Naive thymus-derived CD4-positive, alpha-beta T cell (primary cell): ENCODE measurements at regions of chr7 and their contacts with region 1.

Region 1: DNA sequence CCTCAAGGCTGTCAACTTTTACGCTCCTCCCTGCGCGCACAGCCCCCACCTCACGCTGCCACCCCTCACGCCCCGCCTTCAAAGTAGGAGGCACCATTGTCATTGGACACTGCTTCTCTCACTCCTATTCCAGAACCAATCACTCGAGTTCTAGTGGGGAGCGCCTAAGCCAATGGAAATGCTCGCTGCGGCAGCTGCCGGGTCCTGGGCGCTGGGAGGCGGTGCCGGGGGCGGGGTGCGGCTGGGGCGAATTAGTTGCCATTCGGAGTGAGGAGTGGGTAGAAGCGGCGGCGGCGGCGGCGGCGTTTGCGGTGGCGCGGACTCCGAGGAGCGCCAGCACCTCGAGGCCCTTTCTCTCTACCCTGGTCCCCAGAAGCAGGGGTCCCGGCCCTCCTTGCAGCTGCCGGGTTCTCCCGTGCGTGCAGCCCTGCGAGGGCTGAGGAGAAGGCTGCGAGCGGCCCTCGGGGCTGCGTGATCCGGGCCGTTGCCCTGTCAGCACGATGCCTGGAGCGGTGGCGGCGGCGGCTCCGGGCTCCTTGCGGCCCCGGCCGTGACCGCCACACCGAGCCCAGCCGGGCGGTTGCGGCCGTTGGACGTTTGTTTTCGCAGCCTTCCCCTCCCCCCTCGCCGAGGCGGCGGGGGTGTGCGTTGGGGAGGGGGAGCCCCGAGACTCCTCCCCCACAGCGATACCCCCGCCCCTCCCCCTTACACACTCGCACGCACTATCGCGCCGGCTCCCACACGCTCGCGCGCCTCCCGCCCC is at the start of gene GLCCI1:
- DNase-seq: peak; percentile 90 to 98 (median 97)
- ATAC-seq: peak; percentile 95
- H3K4me3 ChIP-seq: peak within 1 kb of the TSS; percentile 75
- H3K4me3 Mint-ChIP-seq: peak within 1 kb of the TSS in 9 of 10 donors; percentile 88 to 99 (median 94)
- H3K27ac ChIP-seq: peak within 1 kb of the TSS; percentile 88
- H3K27ac Mint-ChIP-seq: peak within 1 kb of the TSS; percentile 78 to 98 (median 91)
- H3K4me1 ChIP-seq: peaks cover 16 to 42% of the 10 kb centered on the region in 2 donors
- H3K4me1 Mint-ChIP-seq: peaks cover 5 to 39% (median 29%) of the 10 kb centered on the region in 7 donors
- H3K27me3 ChIP-seq: no peaks in the 10 kb centered on the region
- H3K27me3 Mint-ChIP-seq: no peaks in the 10 kb centered on the region
- total RNA-seq, gene GLCCI1: 24.9 to 43.1 (median 35.4) TPM

Region 2: GRCh38 chr7:7556847-7557246 is 411.9 kb before region 1 on chr7:
- CTCF ChIA-PET with region 1: no interaction called
- POLR2A ChIA-PET with region 1: no interaction called
- intact Hi-C with region 1: no loop called
- DNase-seq: no peak
- ATAC-seq: no peak
- H3K4me3 ChIP-seq: no peak overlapping the region
- H3K4me3 Mint-ChIP-seq: no peak overlapping the region
- H3K27ac ChIP-seq: no peak overlapping the region
- H3K27ac Mint-ChIP-seq: no peak overlapping the region
- H3K4me1 ChIP-seq: no peaks in the 10 kb centered on the region
- H3K4me1 Mint-ChIP-seq: no peaks in the 10 kb centered on the region
- H3K27me3 ChIP-seq: no peaks in the 10 kb centered on the region
- H3K27me3 Mint-ChIP-seq: peaks cover 0 to 39% (median 3%) of the 10 kb centered on the region in 5 donors

Region 3: GRCh38 chr7:7566651-7567611 is 401.8 kb before region 1 on chr7 and contains the start of gene MIOS:
- CTCF ChIA-PET with region 1: no interaction called
- POLR2A ChIA-PET with region 1: interaction called, 5 read pairs
- intact Hi-C with region 1: loop called (anchors 1 to 2 kb)
- DNase-seq: peak; percentile 73 to 88 (median 83)
- ATAC-seq: peak; percentile 95
- H3K4me3 ChIP-seq: peak within 1 kb of the TSS; percentile 77
- H3K4me3 Mint-ChIP-seq: peak within 1 kb of the TSS in 9 of 10 donors; percentile 75 to 92 (median 86)
- H3K27ac ChIP-seq: peak within 1 kb of the TSS; percentile 98
- H3K27ac Mint-ChIP-seq: peak within 1 kb of the TSS; percentile 80 to 91 (median 85)
- H3K4me1 ChIP-seq: peaks cover 27 to 29% of the 10 kb centered on the region in 2 donors
- H3K4me1 Mint-ChIP-seq: peaks cover 21 to 41% (median 37%) of the 10 kb centered on the region in 7 donors
- H3K27me3 ChIP-seq: no peaks in the 10 kb centered on the region
- H3K27me3 Mint-ChIP-seq: no peaks in the 10 kb centered on the region
- total RNA-seq, gene MIOS: 24.3 to 31.7 (median 28.7) TPM

Region 4: DNA sequence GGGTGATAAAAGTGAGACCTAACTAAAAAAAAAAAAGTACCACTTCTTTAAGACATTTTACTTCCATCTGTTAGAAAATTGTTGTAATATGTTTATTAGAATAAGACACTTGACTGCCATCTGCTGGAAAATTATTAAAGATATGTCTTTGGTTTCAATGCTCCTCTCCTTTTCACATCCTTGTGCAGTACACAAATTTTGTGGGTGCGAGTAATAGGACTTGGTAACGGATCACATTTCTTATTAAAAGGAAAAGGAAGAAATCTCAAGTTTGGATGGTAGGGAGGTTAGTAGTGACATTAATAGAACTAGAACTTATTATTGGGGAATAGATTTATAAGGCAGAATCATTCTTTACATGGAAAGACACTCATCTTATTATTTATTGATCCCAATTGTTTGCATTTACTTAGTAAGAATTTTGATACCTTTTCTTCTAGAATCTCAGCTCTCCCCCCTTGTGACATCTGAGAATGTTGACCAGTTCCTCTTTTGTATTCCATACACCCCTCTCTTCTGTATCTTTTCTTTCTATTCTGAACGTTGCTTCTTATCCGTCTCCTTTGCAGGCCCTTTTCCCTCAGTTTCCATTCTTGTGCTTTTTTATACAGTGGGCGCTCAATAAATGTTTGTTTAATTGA is 207.3 kb before region 1 on chr7:
- CTCF ChIA-PET with region 1: interaction called, 3 read pairs
- POLR2A ChIA-PET with region 1: interaction called, 13 read pairs
- intact Hi-C with region 1: loop called (anchors 1 kb)
- DNase-seq: peak in 7 of 9 donors; percentile 25 to 59 (median 51)
- ATAC-seq: peak; percentile 45
- H3K4me3 ChIP-seq: peak overlapping the region; percentile 48
- H3K4me3 Mint-ChIP-seq: peak overlapping the region; percentile 69 to 99 (median 90)
- H3K27ac ChIP-seq: peak overlapping the region; percentile 76
- H3K27ac Mint-ChIP-seq: peak overlapping the region; percentile 88 to 99 (median 94)
- H3K4me1 ChIP-seq: peaks cover 8 to 31% of the 10 kb centered on the region in 2 donors
- H3K4me1 Mint-ChIP-seq: peaks cover 30 to 54% (median 51%) of the 10 kb centered on the region in 7 donors
- H3K27me3 ChIP-seq: no peaks in the 10 kb centered on the region
- H3K27me3 Mint-ChIP-seq: no peaks in the 10 kb centered on the region

Region 5: DNA sequence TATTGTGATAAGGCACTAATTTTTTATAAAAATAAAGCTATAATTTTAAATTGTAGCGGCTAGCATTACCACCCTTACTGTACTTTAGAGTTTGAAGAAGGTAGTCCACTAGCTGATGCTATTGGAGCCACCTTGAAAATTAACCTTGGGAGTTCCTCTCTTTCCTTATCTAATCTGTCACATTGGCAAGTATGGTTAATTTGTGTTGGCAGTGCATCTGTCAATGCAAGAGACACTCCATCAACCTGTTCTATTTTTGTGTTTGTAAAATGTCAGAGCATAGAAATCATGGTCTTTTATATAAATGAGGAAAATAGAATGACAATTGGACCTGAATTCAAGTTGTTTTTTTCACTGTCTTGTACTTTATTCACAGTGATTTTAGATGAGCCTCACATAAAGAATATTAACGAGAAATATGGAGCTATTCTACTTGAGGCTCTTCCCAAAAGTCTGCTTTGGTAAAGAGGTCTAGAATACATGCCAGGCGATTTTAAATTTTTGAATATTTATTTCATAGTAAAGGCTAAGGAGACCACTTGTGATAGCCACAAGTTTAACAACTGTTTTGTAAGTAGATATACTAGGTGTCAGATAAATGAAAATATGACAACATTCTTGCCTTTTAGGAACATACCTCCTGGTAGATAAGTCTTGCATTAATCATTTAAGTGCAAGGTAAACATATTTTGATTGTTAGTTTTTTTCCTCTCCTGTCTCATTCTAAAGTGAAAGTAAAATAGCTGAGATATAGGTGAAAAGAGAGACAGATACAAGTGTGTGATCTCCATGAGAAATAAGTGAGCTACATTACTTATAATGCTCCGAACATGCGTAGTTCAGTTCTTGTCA is 20.6 kb after region 1 on chr7:
- CTCF ChIA-PET with region 1: no interaction called
- POLR2A ChIA-PET with region 1: interaction called, 33 read pairs
- intact Hi-C with region 1: loop called (anchors 1 to 2 kb)
- DNase-seq: no peak
- ATAC-seq: peak; percentile 46
- H3K4me3 ChIP-seq: peak overlapping the region; percentile 17
- H3K4me3 Mint-ChIP-seq: peak overlapping the region; percentile 17 to 87 (median 79)
- H3K27ac ChIP-seq: peak overlapping the region; percentile 52
- H3K27ac Mint-ChIP-seq: peak overlapping the region; percentile 35 to 86 (median 70)
- H3K4me1 ChIP-seq: peaks cover 12 to 24% of the 10 kb centered on the region in 2 donors
- H3K4me1 Mint-ChIP-seq: peaks cover 27 to 71% (median 62%) of the 10 kb centered on the region in 7 donors
- H3K27me3 ChIP-seq: no peaks in the 10 kb centered on the region
- H3K27me3 Mint-ChIP-seq: no peaks in the 10 kb centered on the region

Region 6: GRCh38 chr7:8035647-8036518 is 67.2 kb after region 1 on chr7:
- CTCF ChIA-PET with region 1: interaction called, 3 read pairs
- POLR2A ChIA-PET with region 1: interaction called, 11 read pairs
- intact Hi-C with region 1: loop called in 1 of 2 experiments (anchors 1 kb)
- DNase-seq: peak in 7 of 9 donors; percentile 13 to 51 (median 36)
- ATAC-seq: peak; percentile 96
- H3K4me3 ChIP-seq: no peak overlapping the region
- H3K4me3 Mint-ChIP-seq: no peak overlapping the region
- H3K27ac ChIP-seq: no peak overlapping the region
- H3K27ac Mint-ChIP-seq: peak overlapping the region in 8 of 9 donors; percentile 21 to 83 (median 58)
- H3K4me1 ChIP-seq: peaks cover 5 to 6% of the 10 kb centered on the region in 2 donors
- H3K4me1 Mint-ChIP-seq: peaks cover 9 to 28% (median 19%) of the 10 kb centered on the region in 7 donors
- H3K27me3 ChIP-seq: no peaks in the 10 kb centered on the region
- H3K27me3 Mint-ChIP-seq: no peaks in the 10 kb centered on the region

Region 7: GRCh38 chr7:8134089-8134733 is 165.5 kb after region 1 on chr7:
- CTCF ChIA-PET with region 1: no interaction called
- POLR2A ChIA-PET with region 1: interaction called, 7 read pairs
- intact Hi-C with region 1: loop called (anchors 1 kb)
- DNase-seq: peak in 8 of 9 donors; percentile 25 to 51 (median 44)
- ATAC-seq: peak; percentile 32
- H3K4me3 ChIP-seq: peak overlapping the region; percentile 7
- H3K4me3 Mint-ChIP-seq: peak overlapping the region; percentile 25 to 82 (median 61)
- H3K27ac ChIP-seq: peak overlapping the region; percentile 47
- H3K27ac Mint-ChIP-seq: peak overlapping the region; percentile 78 to 98 (median 94)
- H3K4me1 ChIP-seq: peaks cover 45 to 50% of the 10 kb centered on the region in 2 donors
- H3K4me1 Mint-ChIP-seq: peaks cover 38 to 65% (median 56%) of the 10 kb centered on the region in 7 donors
- H3K27me3 ChIP-seq: no peaks in the 10 kb centered on the region
- H3K27me3 Mint-ChIP-seq: no peaks in the 10 kb centered on the region

Region 8: GRCh38 chr7:8197994-8198698 is 229.4 kb after region 1 on chr7:
- CTCF ChIA-PET with region 1: no interaction called
- POLR2A ChIA-PET with region 1: no interaction called
- intact Hi-C with region 1: loop called in 1 of 2 experiments (anchors 2 kb)
- DNase-seq: no peak
- ATAC-seq: peak; percentile 60
- H3K4me3 ChIP-seq: no peak overlapping the region
- H3K4me3 Mint-ChIP-seq: peak overlapping the region in 1 of 10 donors; percentile 44
- H3K27ac ChIP-seq: no peak overlapping the region
- H3K27ac Mint-ChIP-seq: peak overlapping the region in 2 of 9 donors; percentile 57 to 60
- H3K4me1 ChIP-seq: peaks cover 0 to 10% of the 10 kb centered on the region in 2 donors
- H3K4me1 Mint-ChIP-seq: peaks cover 0 to 57% (median 7%) of the 10 kb centered on the region in 7 donors
- H3K27me3 ChIP-seq: no peaks in the 10 kb centered on the region
- H3K27me3 Mint-ChIP-seq: peaks cover 3 to 17% (median 4%) of the 10 kb centered on the region in 5 donors

Region 9: DNA sequence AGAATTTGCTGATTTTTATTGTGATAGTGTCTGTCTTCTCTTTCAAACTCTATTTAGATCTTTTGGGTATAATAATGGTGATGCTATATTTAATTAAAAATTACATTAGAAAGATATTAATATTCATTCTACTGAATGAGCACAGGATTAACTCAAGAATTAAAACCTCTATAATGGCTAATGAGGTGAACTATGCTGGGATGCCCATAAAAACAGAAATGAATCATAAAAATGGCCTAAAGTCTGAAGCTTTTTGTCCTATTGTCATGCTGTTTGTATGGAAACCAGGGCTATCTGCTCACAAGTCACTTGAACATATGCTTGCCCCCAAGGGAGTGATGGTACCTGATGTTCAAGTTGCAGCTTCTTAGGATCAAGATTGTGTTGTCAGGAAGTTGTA is 369.5 kb after region 1 on chr7:
- CTCF ChIA-PET with region 1: no interaction called
- POLR2A ChIA-PET with region 1: no interaction called
- intact Hi-C with region 1: no loop called
- DNase-seq: no peak
- ATAC-seq: no peak
- H3K4me3 ChIP-seq: no peak overlapping the region
- H3K4me3 Mint-ChIP-seq: no peak overlapping the region
- H3K27ac ChIP-seq: no peak overlapping the region
- H3K27ac Mint-ChIP-seq: no peak overlapping the region
- H3K4me1 ChIP-seq: no peaks in the 10 kb centered on the region
- H3K4me1 Mint-ChIP-seq: no peaks in the 10 kb centered on the region
- H3K27me3 ChIP-seq: no peaks in the 10 kb centered on the region
- H3K27me3 Mint-ChIP-seq: peaks cover 2 to 16% (median 9%) of the 10 kb centered on the region in 5 donors